Cardiac septum (tissue), 1 donor: ENCODE measurements at regions of chr9 and their contacts with region 1.

Region 1: GRCh38 chr9:18632632-18633403 is 158.9 kb downstream of the ADAMTSL1 start:
- DNase-seq: no peak

Region 2: DNA sequence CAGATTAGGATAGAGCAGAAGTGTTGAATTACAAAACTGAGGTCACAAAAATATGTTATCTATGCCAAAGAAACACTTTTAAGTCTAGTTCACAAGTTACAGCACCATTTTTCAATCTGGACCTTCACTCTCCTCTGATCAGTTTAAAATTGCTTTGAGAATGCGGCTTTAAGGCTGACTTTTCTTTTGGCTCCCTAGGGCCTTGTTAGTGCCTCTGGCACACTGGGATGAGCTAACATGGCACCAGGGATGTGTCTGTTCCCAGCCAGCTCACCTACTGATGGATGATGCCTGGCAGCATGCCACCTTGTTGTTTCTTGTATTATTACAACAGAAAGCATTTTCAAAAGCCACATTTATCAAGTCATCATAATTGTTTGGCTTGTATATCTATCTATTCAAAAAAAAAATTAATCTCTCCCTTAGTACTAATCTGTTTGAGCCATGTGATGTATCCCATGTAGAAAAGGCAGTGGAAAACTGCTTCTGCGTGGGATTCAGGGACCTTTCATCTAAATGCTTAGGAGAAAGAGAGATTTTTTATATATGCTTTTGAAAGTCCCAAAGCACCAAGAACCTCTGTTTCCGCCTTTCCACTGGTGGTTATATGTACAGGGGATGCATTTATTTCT is 112.3 kb before region 1 on chr9:
- intact Hi-C with region 1: no loop called
- DNase-seq: no peak

Region 3: GRCh38 chr9:18555105-18555883 is 77.5 kb before region 1 on chr9:
- intact Hi-C with region 1: loop called (anchors 5 kb)
- DNase-seq: no peak

Region 4: GRCh38 chr9:18976709-18977531 is 344.1 kb after region 1 on chr9:
- intact Hi-C with region 1: no loop called
- DNase-seq: no peak